ENCODE measurements at regions of chr6 and their contacts with region 1.

Region 1: GRCh38 chr6:84892671-84893070 is 128.3 kb upstream of the TBX18 start:
- DNase-seq: no peak
- H3K4me3 ChIP-seq: no peak overlapping the region
- H3K27ac ChIP-seq: no peak overlapping the region
- H3K4me1 ChIP-seq: no peaks in the 10 kb centered on the region
- H3K27me3 ChIP-seq: no peaks in the 10 kb centered on the region
- CTCF ChIP-seq: no peak
- EP300 ChIP-seq: no peak
- POLR2A ChIP-seq: no peak

Region 2: DNA sequence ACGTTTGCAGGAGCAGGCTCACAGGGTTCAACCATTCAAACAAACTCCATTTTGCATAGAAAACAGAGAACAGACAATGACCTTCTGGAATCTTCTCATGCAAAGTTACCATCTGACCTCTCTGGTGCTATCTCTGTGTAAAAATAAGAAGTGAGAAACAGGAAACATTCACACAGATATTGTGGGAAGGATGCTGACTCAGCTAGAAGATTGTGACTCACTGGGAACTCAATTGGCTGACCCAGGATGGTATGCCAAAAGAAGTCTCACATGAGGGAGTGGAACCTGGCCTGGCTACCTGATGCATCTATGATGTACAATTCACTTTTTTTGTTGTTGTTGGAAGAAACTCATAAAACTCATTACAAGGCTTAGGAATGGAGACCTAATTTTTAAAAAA is 67.2 kb before region 1 on chr6:
- intact Hi-C with region 1: no loop called
- DNase-seq: no peak
- H3K4me3 ChIP-seq: no peak overlapping the region
- H3K27ac ChIP-seq: no peak overlapping the region
- H3K4me1 ChIP-seq: no peaks in the 10 kb centered on the region
- H3K27me3 ChIP-seq: no peaks in the 10 kb centered on the region
- CTCF ChIP-seq: no peak
- EP300 ChIP-seq: no peak
- POLR2A ChIP-seq: no peak

Region 3: GRCh38 chr6:85033547-85033946 is 140.9 kb after region 1 on chr6:
- intact Hi-C with region 1: no loop called
- DNase-seq: no peak
- H3K4me3 ChIP-seq: no peak overlapping the region
- H3K27ac ChIP-seq: no peak overlapping the region
- H3K4me1 ChIP-seq: no peaks in the 10 kb centered on the region
- H3K27me3 ChIP-seq: no peaks in the 10 kb centered on the region
- CTCF ChIP-seq: no peak
- EP300 ChIP-seq: no peak
- POLR2A ChIP-seq: no peak

Region 4: DNA sequence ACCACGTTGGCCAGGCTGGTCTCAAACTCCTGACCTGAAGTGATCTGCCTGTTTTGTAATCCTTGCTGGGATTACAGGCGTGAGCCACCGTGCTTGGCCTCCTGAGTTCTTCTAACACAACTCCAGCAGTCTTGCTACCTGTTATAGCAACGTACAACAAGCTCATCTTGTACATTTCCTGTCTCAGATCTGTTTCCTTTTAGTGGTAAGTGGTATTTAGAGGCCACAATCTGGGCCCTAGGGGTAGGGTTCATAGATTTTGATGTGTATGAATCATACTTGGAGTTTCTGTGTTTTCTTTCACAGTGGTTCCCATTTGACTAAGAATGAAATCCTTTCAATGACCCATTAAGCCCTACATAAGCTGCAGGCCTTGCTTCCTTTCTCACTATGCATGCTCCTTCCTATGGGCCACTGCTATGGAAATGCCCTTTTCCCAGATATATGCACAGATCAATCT is 777.1 kb after region 1 on chr6:
- intact Hi-C with region 1: loop called in 1 of 4 experiments (anchors 5 kb)
- DNase-seq: no peak
- H3K4me3 ChIP-seq: no peak overlapping the region
- H3K27ac ChIP-seq: no peak overlapping the region
- H3K4me1 ChIP-seq: peaks cover 1% of the 10 kb centered on the region
- H3K27me3 ChIP-seq: no peaks in the 10 kb centered on the region
- CTCF ChIP-seq: no peak
- EP300 ChIP-seq: no peak
- POLR2A ChIP-seq: no peak